Activated naive CD4-positive, alpha-beta T cell treated with anti-CD3 and anti-CD28 coated beads for 36 hours (primary cell): ENCODE measurements at regions of chr16 and their contacts with region 1.

Region 1: DNA sequence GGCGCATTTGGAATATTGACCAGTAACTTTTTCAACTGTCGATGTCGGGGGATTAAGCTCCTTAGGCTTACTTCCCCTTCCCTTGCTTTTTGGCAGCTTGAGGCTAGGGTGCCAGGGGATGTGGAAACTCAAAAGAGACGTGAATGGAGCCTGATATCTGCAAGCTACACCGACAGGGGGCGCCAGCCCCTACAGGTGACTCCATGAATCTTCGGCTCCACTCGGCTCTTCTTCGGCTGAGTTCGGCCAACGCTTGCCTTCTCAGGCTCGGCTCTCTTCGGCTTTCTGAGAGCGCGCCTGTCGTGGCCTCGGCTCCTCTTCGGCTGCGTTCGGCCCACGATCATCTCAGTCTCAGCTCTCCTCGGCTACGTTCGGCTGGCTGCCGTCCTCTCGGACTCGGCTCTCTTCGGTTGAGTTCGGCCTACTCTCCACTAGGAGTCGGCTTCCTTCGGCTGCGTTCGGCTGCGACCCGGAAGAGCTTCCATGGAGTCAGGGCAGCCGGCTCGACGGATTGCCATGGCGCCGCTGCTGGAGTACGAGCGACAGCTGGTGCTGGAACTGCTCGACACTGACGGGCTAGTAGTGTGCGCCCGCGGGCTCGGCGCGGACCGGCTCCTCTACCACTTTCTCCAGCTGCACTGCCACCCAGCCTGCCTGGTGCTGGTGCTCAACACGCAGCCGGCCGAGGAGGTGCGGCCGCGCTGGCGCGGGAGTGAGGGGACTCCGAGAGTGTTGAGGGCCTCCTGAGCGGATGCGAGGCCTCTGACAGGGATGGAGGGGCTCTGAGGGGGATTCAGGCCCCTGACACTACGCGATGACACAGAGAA is at the start of gene ERCC4:
- DNase-seq: peak; percentile 100
- H3K4me3 Mint-ChIP-seq: peak within 1 kb of the TSS; percentile 91
- H3K27ac Mint-ChIP-seq: peak within 1 kb of the TSS; percentile 82
- H3K4me1 Mint-ChIP-seq: peaks cover 20% of the 10 kb centered on the region
- H3K27me3 Mint-ChIP-seq: no peaks in the 10 kb centered on the region
- total RNA-seq, gene ERCC4: 10.3 to 10.7 TPM

Region 2: DNA sequence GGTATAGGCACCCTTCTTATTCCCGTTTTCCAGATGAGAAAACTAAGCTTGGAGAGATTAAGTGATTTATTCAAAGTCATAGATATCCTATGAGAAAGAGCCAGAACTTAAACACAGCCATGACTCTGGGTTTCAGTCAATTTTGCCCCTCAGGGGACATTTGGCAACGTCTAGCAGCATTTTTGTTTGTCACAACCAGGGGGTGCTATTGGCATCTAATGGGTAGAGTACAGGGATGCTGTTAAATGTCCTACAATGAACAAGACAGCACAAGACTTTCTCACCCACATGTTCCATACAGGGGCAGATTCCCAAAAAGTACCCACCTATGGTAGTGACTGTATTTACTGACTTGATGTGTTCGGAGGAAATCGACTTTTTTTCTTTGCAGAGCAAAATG is 1023.3 kb before region 1 on chr16:
- CTCF ChIA-PET with region 1: no interaction called
- intact Hi-C with region 1: loop called (anchors 1 kb)
- DNase-seq: no peak
- H3K4me3 Mint-ChIP-seq: no peak overlapping the region
- H3K27ac Mint-ChIP-seq: no peak overlapping the region
- H3K4me1 Mint-ChIP-seq: peaks cover 1% of the 10 kb centered on the region
- H3K27me3 Mint-ChIP-seq: peaks cover 38% of the 10 kb centered on the region

Region 3: DNA sequence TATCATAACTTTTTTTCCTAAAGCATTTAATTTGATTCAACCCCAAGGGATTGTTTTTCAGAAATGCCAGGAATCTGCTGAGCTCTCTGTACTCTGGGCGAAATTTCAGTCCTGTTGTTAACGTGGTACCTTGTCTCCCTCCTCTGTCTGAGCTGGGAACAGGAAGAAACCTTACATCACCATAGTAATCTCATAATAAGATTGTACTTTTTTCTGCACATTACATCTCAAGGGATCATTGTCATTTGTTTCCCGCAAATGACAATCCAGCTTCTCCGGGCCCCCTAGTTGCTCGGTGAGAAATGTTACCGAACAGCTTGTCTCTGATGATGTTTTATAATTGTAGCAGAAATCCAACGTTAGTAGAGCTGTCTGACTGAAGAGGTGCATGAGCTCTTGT is 152.7 kb before region 1 on chr16:
- CTCF ChIA-PET with region 1: no interaction called
- intact Hi-C with region 1: no loop called
- DNase-seq: no peak
- H3K4me3 Mint-ChIP-seq: no peak overlapping the region
- H3K27ac Mint-ChIP-seq: no peak overlapping the region
- H3K4me1 Mint-ChIP-seq: no peaks in the 10 kb centered on the region
- H3K27me3 Mint-ChIP-seq: peaks cover 1% of the 10 kb centered on the region

Region 4: GRCh38 chr16:13906168-13907089 is 13.5 kb before region 1 on chr16:
- CTCF ChIA-PET with region 1: interaction called, 29 read pairs
- intact Hi-C with region 1: no loop called
- DNase-seq: no peak
- H3K4me3 Mint-ChIP-seq: no peak overlapping the region
- H3K27ac Mint-ChIP-seq: no peak overlapping the region
- H3K4me1 Mint-ChIP-seq: no peaks in the 10 kb centered on the region
- H3K27me3 Mint-ChIP-seq: peaks cover 28% of the 10 kb centered on the region

Region 5: GRCh38 chr16:14070877-14071575 is 151.1 kb after region 1 on chr16 and contains the start of gene MRTFB:
- CTCF ChIA-PET with region 1: interaction called, 3 read pairs
- intact Hi-C with region 1: loop called (anchors 5 kb)
- DNase-seq: peak; percentile 76
- H3K4me3 Mint-ChIP-seq: peak within 1 kb of the TSS; percentile 86
- H3K27ac Mint-ChIP-seq: peak within 1 kb of the TSS; percentile 59
- H3K4me1 Mint-ChIP-seq: peaks cover 11% of the 10 kb centered on the region
- H3K27me3 Mint-ChIP-seq: no peaks in the 10 kb centered on the region
- total RNA-seq, gene MRTFB: 8.2 to 8.4 TPM

Region 6: GRCh38 chr16:14249291-14250032 is 329.6 kb after region 1 on chr16:
- CTCF ChIA-PET with region 1: interaction called, 9 read pairs
- intact Hi-C with region 1: loop called (anchors 2 kb)
- DNase-seq: peak; percentile 74
- H3K4me3 Mint-ChIP-seq: no peak overlapping the region
- H3K27ac Mint-ChIP-seq: no peak overlapping the region
- H3K4me1 Mint-ChIP-seq: peaks cover 3% of the 10 kb centered on the region
- H3K27me3 Mint-ChIP-seq: no peaks in the 10 kb centered on the region

Region 7: DNA sequence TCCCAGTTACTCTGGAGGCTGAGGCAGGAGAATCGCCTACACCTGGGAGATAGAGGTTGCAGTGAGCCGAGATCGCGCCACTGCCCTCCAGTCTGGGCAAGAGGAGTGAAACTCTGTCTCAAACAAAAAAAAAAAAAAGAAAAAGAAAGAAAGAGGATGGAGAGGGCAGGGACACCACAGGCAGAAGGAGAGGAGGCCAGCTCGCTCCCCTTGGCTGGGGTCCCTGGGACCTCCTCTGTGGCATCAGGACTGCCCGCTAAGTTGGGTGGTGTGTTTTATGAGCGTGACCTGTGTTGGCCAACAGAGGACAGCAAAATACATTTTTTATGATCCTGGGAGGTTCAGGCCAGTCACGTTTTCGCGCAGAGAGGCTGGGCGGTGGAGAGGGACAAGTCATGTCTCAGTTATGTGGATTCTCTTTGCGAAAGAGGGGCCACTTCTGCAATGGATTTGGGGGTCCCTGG is 380.8 kb after region 1 on chr16:
- CTCF ChIA-PET with region 1: interaction called, 4 read pairs
- intact Hi-C with region 1: loop called (anchors 5 kb)
- DNase-seq: peak; percentile 73
- H3K4me3 Mint-ChIP-seq: peak overlapping the region; percentile 66
- H3K27ac Mint-ChIP-seq: no peak overlapping the region
- H3K4me1 Mint-ChIP-seq: peaks cover 12% of the 10 kb centered on the region
- H3K27me3 Mint-ChIP-seq: no peaks in the 10 kb centered on the region

Region 8: GRCh38 chr16:14632692-14633569 is 713.0 kb after region 1 on chr16 and contains the start of gene BFAR:
- CTCF ChIA-PET with region 1: interaction called, 3 read pairs
- intact Hi-C with region 1: loop called (anchors 5 kb)
- DNase-seq: peak; percentile 98
- H3K4me3 Mint-ChIP-seq: peak within 1 kb of the TSS; percentile 100
- H3K27ac Mint-ChIP-seq: peak within 1 kb of the TSS; percentile 96
- H3K4me1 Mint-ChIP-seq: peaks cover 57% of the 10 kb centered on the region
- H3K27me3 Mint-ChIP-seq: no peaks in the 10 kb centered on the region
- total RNA-seq, gene BFAR: 41.9 to 44.6 TPM